Heart right ventricle (tissue), 16 donors: ENCODE measurements at regions of chr3 and their contacts with region 1.

Region 1: GRCh38 chr3:161274719-161275298 is 53.7 kb downstream of the NMD3 start:
- DNase-seq: no peak
- ATAC-seq: peak in 2 of 8 donors; percentile 39 to 50
- H3K4me3 ChIP-seq: no peak overlapping the region
- H3K27ac ChIP-seq: no peak overlapping the region
- H3K4me1 ChIP-seq: no peaks in the 10 kb centered on the region
- H3K27me3 ChIP-seq: no peaks in the 10 kb centered on the region
- CTCF ChIP-seq: peak; percentile 37 to 65 (median 56)

Region 2: DNA sequence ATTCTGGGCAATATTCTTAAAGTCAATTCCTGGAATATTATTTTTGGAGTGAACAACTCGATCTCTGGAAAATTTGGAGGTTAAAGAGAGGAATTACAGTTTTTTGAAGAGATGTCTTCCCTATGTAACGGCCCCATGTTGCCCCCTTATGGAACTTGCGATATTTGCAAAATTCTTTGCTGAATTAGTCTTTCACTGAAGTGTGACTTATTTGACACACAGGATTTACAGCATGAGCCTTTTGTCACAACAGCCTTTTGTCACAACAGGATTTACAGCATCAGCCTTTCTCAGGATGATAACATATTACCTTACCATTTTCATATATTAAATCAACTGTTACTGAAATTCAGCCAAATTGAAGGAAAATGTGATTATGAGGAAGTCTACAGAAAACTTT is 134.3 kb after region 1 on chr3:
- intact Hi-C with region 1: loop called in 3 of 10 experiments (anchors 5 kb)
- DNase-seq: peak in 1 of 2 donors; percentile 41
- ATAC-seq: peak in 3 of 8 donors; percentile 45 to 57 (median 53)
- H3K4me3 ChIP-seq: no peak overlapping the region
- H3K27ac ChIP-seq: no peak overlapping the region
- H3K4me1 ChIP-seq: peaks cover 0 to 23% (median 15%) of the 10 kb centered on the region in 9 donors
- H3K27me3 ChIP-seq: no peaks in the 10 kb centered on the region
- CTCF ChIP-seq: peak; percentile 16 to 66 (median 59)